Natural killer cell (primary cell): ENCODE measurements at regions of chr1 and their contacts with region 1.

Region 1: GRCh38 chr1:12434174-12434573 is 183.8 kb downstream of the DHRS3 start:
- DNase-seq: peak; percentile 60 to 79
- ATAC-seq: peak; percentile 35 to 68 (median 52)
- H3K4me3 ChIP-seq: no peak overlapping the region
- H3K4me3 Mint-ChIP-seq: peak overlapping the region; percentile 83
- H3K27ac ChIP-seq: peak overlapping the region; percentile 78
- H3K27ac Mint-ChIP-seq: peak overlapping the region; percentile 98
- H3K4me1 ChIP-seq: peaks cover 60% of the 10 kb centered on the region
- H3K4me1 Mint-ChIP-seq: peaks cover 58 to 61% of the 10 kb centered on the region in 2 donors
- H3K27me3 ChIP-seq: no peaks in the 10 kb centered on the region
- H3K27me3 Mint-ChIP-seq: no peaks in the 10 kb centered on the region
- CTCF ChIP-seq: no peak

Region 2: DNA sequence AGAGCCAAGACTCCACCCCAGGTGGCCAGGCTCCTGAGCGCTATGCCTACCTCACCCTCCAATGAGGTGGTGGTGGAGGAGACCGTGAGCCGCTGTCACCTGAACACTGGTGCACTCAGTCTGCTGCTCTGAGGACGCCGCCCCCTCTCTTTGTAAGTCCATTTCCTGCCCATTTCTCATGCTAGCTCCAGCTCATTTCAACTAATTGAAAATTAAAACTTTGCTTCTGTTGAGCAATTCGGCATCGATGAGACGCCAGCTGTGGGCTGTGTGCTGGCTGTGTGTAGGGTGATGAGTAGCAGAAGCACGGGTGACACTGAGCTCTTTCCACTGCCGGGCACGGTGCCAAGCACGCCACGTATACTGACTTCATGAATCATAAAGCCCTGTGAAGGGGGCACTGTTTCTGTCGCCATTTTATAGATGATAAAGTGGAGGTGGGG is 256.2 kb before region 1 on chr1:
- intact Hi-C with region 1: loop called (anchors 10 kb)
- DNase-seq: peak; percentile 90 to 96
- ATAC-seq: peak; percentile 48 to 64 (median 52)
- H3K4me3 ChIP-seq: peak overlapping the region; percentile 0
- H3K4me3 Mint-ChIP-seq: peak overlapping the region; percentile 87
- H3K27ac ChIP-seq: peak overlapping the region; percentile 94
- H3K27ac Mint-ChIP-seq: peak overlapping the region; percentile 99
- H3K4me1 ChIP-seq: peaks cover 100% of the 10 kb centered on the region
- H3K4me1 Mint-ChIP-seq: peaks cover 76 to 97% of the 10 kb centered on the region in 2 donors
- H3K27me3 ChIP-seq: no peaks in the 10 kb centered on the region
- H3K27me3 Mint-ChIP-seq: no peaks in the 10 kb centered on the region
- CTCF ChIP-seq: no peak

Region 3: DNA sequence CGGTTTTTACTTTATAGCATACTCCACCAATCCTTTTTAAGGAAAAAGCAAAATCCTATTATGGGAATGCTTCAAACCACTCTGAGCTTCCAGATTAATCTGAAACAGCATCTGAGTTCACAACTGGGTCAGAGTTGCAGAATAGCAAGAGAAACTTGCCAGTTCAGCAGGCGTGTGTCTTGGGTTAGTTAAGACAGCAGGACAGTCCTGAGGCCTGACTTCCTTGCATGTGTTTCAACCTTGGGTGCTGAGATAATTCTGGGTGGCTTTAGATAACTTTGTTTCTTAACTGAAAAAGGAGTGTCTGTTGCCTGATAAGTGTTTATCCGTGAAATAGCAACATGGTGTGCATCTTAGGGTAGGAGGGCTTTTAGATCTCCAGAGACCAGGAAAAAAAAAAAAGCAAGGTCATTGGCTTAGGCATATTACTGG is 14.6 kb after region 1 on chr1:
- intact Hi-C with region 1: loop called (anchors 1 kb)
- DNase-seq: peak in 1 of 2 donors; percentile 38
- ATAC-seq: no peak
- H3K4me3 ChIP-seq: no peak overlapping the region
- H3K4me3 Mint-ChIP-seq: peak overlapping the region; percentile 85
- H3K27ac ChIP-seq: peak overlapping the region; percentile 75
- H3K27ac Mint-ChIP-seq: peak overlapping the region; percentile 95 to 98
- H3K4me1 ChIP-seq: peaks cover 34% of the 10 kb centered on the region
- H3K4me1 Mint-ChIP-seq: peaks cover 72 to 75% of the 10 kb centered on the region in 2 donors
- H3K27me3 ChIP-seq: no peaks in the 10 kb centered on the region
- H3K27me3 Mint-ChIP-seq: no peaks in the 10 kb centered on the region
- CTCF ChIP-seq: no peak

Region 4: GRCh38 chr1:12472798-12473551 is 38.8 kb after region 1 on chr1:
- intact Hi-C with region 1: loop called (anchors 1 kb)
- DNase-seq: peak; percentile 50 to 74
- ATAC-seq: peak; percentile 72 to 80 (median 75)
- H3K4me3 ChIP-seq: no peak overlapping the region
- H3K4me3 Mint-ChIP-seq: peak overlapping the region; percentile 88
- H3K27ac ChIP-seq: peak overlapping the region; percentile 77
- H3K27ac Mint-ChIP-seq: peak overlapping the region; percentile 96 to 98
- H3K4me1 ChIP-seq: peaks cover 76% of the 10 kb centered on the region
- H3K4me1 Mint-ChIP-seq: peaks cover 88 to 90% of the 10 kb centered on the region in 2 donors
- H3K27me3 ChIP-seq: no peaks in the 10 kb centered on the region
- H3K27me3 Mint-ChIP-seq: no peaks in the 10 kb centered on the region
- CTCF ChIP-seq: no peak

Region 5: DNA sequence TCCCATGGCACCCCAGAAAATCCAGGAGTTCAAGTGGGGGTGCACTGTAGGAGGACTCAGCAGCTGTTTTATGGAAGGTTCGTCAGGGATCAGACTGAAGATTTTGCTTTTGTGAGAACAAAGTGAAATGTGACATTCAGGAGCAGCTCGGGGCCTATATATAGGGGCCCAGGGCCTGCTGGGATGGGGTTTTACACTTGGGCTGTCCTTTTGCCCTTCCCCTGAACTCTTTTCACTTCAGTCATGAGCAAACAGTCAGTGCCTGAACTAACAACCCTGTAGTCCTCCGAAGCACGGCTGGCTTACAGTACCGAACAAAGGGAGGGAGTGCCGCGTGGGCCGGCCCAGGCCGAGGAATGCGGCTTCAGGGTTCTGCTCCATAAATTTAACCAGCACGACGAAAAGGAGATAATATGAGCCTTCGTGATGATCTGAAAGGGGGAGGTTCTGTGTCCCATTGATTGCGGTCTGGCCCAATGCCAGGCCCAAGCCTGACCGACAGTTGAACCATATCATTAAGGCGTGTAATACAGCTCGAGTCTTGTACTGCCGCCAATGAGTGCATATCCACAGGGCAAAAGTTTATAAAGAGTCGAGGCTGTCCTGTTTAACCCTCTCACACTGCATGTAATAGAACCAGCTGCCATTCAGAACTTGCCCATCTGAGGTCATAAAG is 43.9 kb after region 1 on chr1:
- intact Hi-C with region 1: loop called (anchors 1 kb)
- DNase-seq: peak in 1 of 2 donors; percentile 42
- ATAC-seq: peak in 2 of 3 donors; percentile 3 to 28
- H3K4me3 ChIP-seq: no peak overlapping the region
- H3K4me3 Mint-ChIP-seq: peak overlapping the region; percentile 75
- H3K27ac ChIP-seq: peak overlapping the region; percentile 41
- H3K27ac Mint-ChIP-seq: peak overlapping the region; percentile 96 to 98
- H3K4me1 ChIP-seq: peaks cover 72% of the 10 kb centered on the region
- H3K4me1 Mint-ChIP-seq: peaks cover 85 to 86% of the 10 kb centered on the region in 2 donors
- H3K27me3 ChIP-seq: no peaks in the 10 kb centered on the region
- H3K27me3 Mint-ChIP-seq: no peaks in the 10 kb centered on the region
- CTCF ChIP-seq: no peak

Region 6: DNA sequence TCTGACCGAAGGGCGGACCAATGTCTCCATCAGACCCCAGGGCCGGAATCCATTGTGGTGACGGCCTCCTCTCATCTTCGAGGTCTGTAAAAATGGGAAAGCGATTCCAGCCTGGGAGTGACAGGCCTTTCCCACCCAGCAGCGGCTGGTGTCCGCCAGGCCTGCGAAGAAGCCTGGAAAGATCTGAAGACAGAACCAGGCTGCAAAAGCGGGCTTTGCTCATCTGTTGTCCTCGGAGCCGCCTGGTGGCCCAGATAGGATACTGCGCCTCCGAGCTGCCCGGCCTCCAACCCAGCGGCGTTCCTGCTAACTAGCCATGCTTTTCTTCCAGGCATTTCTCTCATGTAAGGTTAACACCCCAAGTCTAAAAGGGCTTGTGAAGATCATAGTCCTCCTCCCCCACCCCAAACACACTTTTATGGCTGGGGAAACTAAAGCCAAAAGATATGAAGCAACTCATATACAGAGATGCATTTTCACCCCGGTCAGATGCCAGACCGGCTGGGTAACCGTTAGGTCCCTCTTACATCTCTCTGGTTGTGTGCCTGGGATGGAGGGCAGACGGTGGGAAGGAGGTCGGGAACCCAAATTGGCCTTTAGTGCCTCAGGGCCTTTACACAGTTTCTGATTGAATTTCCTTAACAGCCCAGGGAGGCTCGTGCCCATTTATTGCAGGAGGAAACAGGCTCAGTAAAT is 185.8 kb after region 1 on chr1:
- intact Hi-C with region 1: loop called (anchors 1 kb)
- DNase-seq: peak; percentile 76 to 89
- ATAC-seq: peak; percentile 54 to 75 (median 59)
- H3K4me3 ChIP-seq: peak overlapping the region; percentile 58
- H3K4me3 Mint-ChIP-seq: peak overlapping the region; percentile 100
- H3K27ac ChIP-seq: no peak overlapping the region
- H3K27ac Mint-ChIP-seq: peak overlapping the region; percentile 96 to 97
- H3K4me1 ChIP-seq: peaks cover 58% of the 10 kb centered on the region
- H3K4me1 Mint-ChIP-seq: peaks cover 46 to 58% of the 10 kb centered on the region in 2 donors
- H3K27me3 ChIP-seq: no peaks in the 10 kb centered on the region
- H3K27me3 Mint-ChIP-seq: no peaks in the 10 kb centered on the region
- CTCF ChIP-seq: peak; percentile 95